ENCODE measurements at regions of chr1 and their contacts with region 1.

Region 1: GRCh38 chr1:234326497-234327366 is 46.5 kb upstream of the COA6 start:
- DNase-seq: peak in 2 of 3 donors; percentile 42 to 71
- ATAC-seq: peak; percentile 87
- H3K4me3 ChIP-seq: no peak overlapping the region
- H3K4me1 ChIP-seq: no peaks in the 10 kb centered on the region
- CTCF ChIP-seq: peak; percentile 34

Region 2: GRCh38 chr1:234114648-234115307 is 212.0 kb before region 1 on chr1:
- intact Hi-C with region 1: loop called in 1 of 2 experiments (anchors 10 kb)
- DNase-seq: peak in 1 of 3 donors; percentile 48
- ATAC-seq: no peak
- H3K4me3 ChIP-seq: no peak overlapping the region
- H3K4me1 ChIP-seq: no peaks in the 10 kb centered on the region
- CTCF ChIP-seq: no peak